Mammary epithelial cell (primary cell): ENCODE measurements at regions of chr1 and their contacts with region 1.

Region 1: GRCh38 chr1:111481387-111482221 is 7.8 kb downstream of the C1orf162 start:
- DNase-seq: peak; percentile 59
- H3K4me3 ChIP-seq: no peak overlapping the region
- H3K27ac ChIP-seq: no peak overlapping the region
- H3K4me1 ChIP-seq: no peaks in the 10 kb centered on the region
- H3K27me3 ChIP-seq: no peaks in the 10 kb centered on the region
- CTCF ChIP-seq: peak; percentile 73 to 76

Region 2: DNA sequence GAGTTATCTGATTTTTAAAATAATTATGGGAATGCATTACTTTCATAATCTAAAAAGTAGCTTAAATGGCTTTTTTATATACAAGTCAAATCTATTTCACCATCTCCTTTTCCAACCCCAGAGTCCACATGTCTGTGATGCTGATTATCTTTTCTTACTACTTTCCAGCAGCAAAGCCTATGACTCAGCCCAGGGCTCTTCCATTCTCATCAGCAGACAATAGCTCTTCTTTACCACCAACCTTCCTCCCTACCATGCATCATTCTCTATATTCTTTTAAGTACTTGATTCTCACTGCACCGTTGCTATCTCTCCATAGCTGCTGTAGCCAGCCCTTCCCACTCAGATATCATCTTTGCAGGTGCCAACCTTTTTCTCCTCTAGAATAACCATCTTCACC is 115.3 kb before region 1 on chr1:
- CTCF ChIA-PET with region 1: no interaction called
- dilution Hi-C with region 1: no loop called
- in situ Hi-C with region 1: no loop called
- intact Hi-C with region 1: no loop called
- DNase-seq: peak; percentile 39
- H3K4me3 ChIP-seq: no peak overlapping the region
- H3K27ac ChIP-seq: no peak overlapping the region
- H3K4me1 ChIP-seq: peaks cover 13% of the 10 kb centered on the region
- H3K27me3 ChIP-seq: no peaks in the 10 kb centered on the region
- CTCF ChIP-seq: no peak

Region 3: DNA sequence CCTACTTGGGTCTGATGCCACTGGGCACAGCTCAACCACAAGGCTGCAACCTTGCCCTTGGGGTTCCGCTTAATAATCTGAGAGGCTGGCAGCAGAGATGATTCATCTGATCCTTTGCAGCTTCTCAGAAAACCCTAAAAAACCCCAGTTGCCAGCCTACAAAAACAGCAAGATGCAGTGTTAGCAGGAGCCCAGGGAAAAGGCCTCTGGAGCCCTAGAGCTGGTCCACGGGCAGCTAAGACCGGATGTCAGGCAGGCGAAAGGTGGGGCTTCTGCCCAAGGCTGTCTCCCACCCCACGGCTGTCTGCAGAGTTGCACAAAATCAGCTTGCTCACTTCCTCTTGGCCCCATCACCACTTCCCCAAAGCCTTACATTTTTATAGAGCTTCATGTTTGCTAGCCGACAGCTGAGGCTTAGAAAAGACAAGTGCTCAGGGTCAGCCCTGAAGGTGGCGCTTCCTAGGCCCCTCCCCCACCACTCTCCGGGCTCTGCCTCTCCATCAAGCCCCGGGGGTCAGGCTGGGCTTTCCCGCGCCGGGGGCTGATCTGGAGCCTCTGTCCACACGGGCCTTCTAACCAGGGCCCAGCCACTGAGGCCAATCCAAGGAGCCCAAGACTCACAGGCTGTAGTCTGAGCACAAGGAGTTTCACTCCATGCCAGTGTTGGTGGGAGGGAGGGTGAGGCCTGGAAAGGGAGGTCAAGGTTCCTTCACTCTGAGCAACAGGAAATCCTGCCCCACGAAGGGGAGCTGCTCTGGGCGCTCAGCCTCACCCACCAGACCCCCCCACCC is 26.0 kb after region 1 on chr1:
- CTCF ChIA-PET with region 1: interaction called, 15 read pairs
- dilution Hi-C with region 1: no loop called
- in situ Hi-C with region 1: no loop called
- intact Hi-C with region 1: loop called (anchors 1 kb)
- DNase-seq: peak; percentile 60
- H3K4me3 ChIP-seq: no peak overlapping the region
- H3K27ac ChIP-seq: no peak overlapping the region
- H3K4me1 ChIP-seq: peaks cover 15% of the 10 kb centered on the region
- H3K27me3 ChIP-seq: no peaks in the 10 kb centered on the region
- CTCF ChIP-seq: no peak

Region 4: DNA sequence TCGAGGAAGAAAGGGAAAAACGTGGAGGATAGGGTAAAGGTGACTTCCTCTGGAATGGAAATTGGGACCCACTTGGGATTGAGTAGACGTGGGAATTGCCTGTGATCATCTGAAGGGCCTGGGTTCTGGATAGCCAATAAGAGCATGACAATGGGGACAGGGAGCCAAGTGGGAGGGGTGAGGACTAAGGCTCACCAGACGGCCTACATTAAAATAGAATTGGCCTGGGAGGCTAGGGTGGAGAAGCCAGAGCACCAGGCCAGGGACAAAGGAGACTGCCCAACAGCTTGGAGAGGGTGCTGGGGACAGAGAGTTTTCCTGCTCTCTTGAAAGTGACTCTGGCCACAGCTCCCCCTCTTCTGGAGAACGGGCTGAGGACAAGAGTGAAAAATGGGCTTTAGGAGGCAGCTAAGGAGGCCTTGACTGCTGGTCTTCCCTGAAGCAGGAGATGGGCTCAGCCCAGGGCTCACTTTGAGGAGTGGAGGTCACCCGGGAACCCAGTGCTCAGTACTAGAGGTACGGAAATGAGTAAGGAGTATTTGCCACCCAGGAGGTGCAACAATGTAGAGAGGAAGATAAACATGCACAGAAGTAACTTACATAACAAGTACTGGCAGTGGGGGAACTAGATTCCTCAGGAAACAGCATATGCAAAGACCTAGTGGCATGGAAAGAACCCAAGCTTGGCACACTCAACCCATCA is 238.8 kb after region 1 on chr1:
- CTCF ChIA-PET with region 1: no interaction called
- dilution Hi-C with region 1: no loop called
- in situ Hi-C with region 1: no loop called
- intact Hi-C with region 1: loop called (anchors 2 kb)
- DNase-seq: no peak
- H3K4me3 ChIP-seq: no peak overlapping the region
- H3K27ac ChIP-seq: no peak overlapping the region
- H3K4me1 ChIP-seq: peaks cover 23% of the 10 kb centered on the region
- H3K27me3 ChIP-seq: no peaks in the 10 kb centered on the region
- CTCF ChIP-seq: no peak

Region 5: DNA sequence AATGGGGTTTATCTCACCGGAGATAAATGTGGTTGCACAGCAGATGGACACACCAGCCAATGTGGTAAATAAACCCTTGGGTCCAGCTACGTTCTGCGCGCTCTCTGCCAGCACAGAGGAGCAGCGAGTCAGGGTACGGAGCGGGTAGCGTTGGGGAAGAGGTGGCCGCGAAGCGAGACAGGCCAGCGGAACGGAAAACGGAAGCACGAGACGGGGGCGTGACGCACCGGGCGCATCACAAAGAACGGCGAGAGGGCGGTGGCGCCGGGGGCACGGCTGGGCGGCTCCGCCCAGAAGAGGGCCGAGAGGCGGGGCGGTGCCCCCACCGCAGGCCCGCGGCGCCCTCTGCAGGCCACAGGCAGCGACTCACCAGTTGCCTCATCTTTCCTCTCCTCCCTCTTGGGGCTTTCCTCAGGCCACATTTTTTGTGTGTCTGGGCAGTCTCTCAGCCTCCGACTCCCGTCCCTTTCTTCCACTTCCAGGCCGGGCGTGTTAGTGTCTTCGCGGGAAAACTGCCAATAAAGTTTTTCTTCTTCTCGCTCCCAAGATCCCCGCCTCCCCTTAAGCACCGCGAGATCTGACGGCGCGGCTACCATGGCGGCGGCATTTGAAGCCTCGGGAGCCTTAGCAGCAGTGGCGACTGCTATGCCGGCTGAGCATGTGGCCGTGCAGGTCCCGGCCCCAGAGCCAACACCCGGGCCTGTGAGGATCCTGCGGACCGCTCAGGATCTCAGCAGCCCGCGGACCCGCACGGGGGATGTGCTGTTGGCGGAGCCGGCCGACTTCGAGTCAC is 273.9 kb after region 1 on chr1 and contains the start of gene DDX20:
- CTCF ChIA-PET with region 1: no interaction called
- dilution Hi-C with region 1: no loop called
- in situ Hi-C with region 1: no loop called
- intact Hi-C with region 1: loop called (anchors 2 kb)
- DNase-seq: peak; percentile 95
- H3K4me3 ChIP-seq: peak within 1 kb of the TSS; percentile 65 to 99 (median 71)
- H3K27ac ChIP-seq: peak within 1 kb of the TSS; percentile 81
- H3K4me1 ChIP-seq: peaks cover 18% of the 10 kb centered on the region
- H3K27me3 ChIP-seq: no peaks in the 10 kb centered on the region
- CTCF ChIP-seq: peak; percentile 66 to 81
- total RNA-seq, gene DDX20: 12.9 to 17.2 TPM

Region 6: DNA sequence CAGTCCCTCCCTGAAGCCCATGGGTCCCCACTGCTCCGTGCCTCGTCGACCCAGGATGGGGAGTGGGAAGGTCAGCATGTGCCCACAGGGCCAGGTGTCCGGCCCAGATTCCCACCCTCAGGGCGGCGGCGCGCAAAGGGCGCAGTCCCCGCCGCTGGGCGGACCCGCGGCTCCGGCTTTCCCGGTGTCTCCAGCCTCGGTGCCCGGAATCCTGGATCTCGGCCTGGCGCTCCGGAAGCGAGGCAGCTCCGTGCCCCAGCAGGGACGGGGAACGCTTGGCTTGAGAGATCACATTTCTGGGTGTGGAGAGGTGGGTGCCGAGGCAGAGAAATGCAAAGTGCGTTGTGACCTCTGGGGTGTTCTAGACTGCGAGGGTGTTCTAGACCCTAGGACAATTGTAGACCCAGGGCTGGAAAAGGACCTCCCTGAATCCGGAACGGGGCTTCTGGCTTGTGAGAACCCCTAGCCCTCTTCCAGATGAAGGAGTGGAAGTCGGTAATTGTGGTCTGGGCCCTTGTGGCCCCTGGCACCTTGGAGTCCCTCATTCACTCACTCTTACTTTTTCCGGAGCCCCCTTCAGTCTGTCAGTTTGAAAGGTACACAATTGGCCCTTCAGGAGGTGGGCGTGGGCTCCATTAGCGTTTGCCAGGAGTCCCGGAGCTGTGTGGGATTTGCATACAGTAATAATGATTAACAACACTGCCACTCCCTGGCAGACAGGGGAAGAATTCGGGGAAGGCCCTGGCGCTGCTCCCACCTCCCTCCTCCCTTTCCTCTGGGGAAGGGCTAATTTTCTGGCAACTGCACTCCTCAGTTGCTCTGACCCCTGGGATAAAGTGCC is 509.5 kb after region 1 on chr1:
- CTCF ChIA-PET with region 1: no interaction called
- dilution Hi-C with region 1: no loop called
- in situ Hi-C with region 1: loop called in 1 of 2 experiments (anchors 25 kb)
- intact Hi-C with region 1: loop called (anchors 10 kb)
- DNase-seq: peak; percentile 57
- H3K4me3 ChIP-seq: peak overlapping the region; percentile 32 to 52 (median 48)
- H3K27ac ChIP-seq: no peak overlapping the region
- H3K4me1 ChIP-seq: peaks cover 18% of the 10 kb centered on the region
- H3K27me3 ChIP-seq: peaks cover 5% of the 10 kb centered on the region
- CTCF ChIP-seq: peak; percentile 43 to 60